ENCODE measurements at regions of chr10 and their contacts with region 1.

Region 1: DNA sequence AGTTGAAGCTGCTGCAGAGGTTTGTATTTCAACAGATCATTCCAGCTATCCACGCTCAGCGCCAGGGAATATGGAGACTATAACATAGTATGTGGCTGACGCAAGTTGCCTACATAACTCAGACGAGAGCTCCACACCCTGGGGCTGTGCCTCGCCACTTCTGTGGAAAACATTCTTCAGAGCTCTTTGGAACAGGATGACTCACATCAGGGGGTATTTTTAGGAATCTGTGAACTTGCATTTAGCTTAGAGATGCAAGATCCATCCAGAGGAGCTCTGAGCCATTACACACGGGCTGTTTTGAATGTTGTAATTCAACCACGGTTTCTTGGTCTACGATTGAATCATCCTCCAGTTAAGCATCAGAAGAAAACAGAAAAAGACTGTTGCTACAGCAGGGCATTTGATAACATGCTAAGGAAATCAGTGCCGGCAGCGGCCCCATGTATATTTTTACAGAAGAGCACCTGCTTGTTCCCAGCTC is 481.5 kb upstream of the AKR1E2 start:
- DNase-seq: peak; percentile 99
- H3K4me3 Mint-ChIP-seq: peak overlapping the region; percentile 48
- H3K27ac Mint-ChIP-seq: peak overlapping the region; percentile 99
- H3K4me1 Mint-ChIP-seq: peaks cover 26% of the 10 kb centered on the region
- H3K27me3 Mint-ChIP-seq: no peaks in the 10 kb centered on the region
- CTCF ChIP-seq: no peak

Region 2: DNA sequence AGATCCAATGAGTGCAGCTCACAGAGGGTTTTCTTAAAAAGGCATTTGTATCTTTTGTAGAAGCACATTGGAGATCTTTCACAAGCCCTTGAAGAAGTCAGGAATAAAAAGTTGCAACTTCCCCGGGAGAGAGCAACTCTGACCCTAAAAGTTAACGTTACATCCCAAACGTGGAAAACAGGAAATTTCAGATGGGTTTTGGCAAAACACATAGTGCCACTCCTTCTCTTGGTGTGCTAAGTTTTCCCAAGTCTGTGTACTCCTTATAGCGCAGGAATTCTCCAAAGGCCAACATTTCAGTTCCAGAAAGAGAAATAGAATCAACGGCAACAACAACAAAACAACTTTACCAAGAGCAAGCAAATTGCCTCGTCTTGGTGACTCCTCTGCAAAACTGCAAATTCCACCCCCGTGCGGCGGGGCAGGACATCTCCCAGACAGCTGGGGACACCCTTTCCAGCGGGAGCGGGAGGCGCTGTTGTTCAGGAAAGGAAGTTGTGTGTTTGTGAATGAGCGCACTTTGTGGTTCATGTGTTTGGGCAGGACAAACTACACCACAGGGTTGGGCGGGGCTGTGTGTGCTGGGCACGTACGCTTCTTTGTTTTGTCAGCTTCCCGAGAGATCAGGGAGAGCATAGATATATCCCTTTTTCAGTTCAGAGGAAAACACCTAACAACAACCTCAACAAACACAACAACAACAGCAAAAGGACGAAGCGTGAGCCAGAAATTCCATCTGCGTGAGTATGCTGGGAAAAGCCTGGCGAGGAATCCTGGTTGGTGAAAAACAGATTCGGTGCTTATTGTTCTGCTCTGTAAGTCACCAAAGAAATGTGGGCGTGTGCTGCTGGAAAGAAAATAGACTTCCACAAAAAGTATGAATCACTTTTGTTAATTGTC is 877.3 kb before region 1 on chr10:
- CTCF ChIA-PET with region 1: interaction called, 4 read pairs
- POLR2A ChIA-PET with region 1: interaction called, 10 read pairs
- intact Hi-C with region 1: loop called (anchors 5 kb)
- DNase-seq: peak; percentile 97
- H3K4me3 Mint-ChIP-seq: peak overlapping the region; percentile 79
- H3K27ac Mint-ChIP-seq: peak overlapping the region; percentile 100
- H3K4me1 Mint-ChIP-seq: peaks cover 46% of the 10 kb centered on the region
- H3K27me3 Mint-ChIP-seq: no peaks in the 10 kb centered on the region
- CTCF ChIP-seq: peak; percentile 55

Region 3: DNA sequence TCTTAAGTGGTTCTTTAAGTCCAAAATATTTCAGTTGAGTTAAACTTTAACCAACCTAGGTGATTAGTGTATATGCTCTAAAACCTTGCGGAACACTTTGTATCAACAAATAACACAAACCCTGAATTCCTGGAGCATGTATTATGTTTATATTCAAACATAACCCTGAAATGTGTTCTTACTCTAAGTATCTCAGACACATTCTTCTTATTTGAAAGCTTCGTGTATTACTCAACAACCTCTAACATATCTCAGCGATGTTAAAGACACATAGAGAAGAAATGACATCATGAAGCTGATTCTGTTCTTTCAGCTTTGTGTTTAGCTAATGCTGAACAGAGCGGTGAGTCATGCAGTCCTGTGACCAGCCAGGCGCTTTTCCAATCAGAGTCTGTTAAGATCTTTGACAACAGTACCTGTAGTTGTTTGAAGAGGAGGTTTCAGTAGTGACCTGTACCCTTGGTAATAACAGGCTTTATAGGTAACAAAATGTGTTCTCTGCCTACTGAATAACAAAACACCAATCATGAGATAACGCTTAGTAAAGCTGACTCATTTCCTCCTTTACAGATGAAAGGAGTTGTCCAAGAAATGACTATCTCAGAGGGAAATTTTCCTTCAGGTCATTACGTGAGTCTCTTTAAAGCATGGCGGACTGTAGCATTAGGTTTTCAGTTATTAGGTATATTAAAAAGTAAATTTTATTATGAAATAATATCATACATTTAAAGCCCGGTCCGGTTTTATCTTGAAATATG is 492.2 kb before region 1 on chr10:
- CTCF ChIA-PET with region 1: interaction called, 4 read pairs
- POLR2A ChIA-PET with region 1: interaction called, 45 read pairs
- intact Hi-C with region 1: loop called (anchors 1 kb)
- DNase-seq: peak; percentile 94
- H3K4me3 Mint-ChIP-seq: peak overlapping the region; percentile 54
- H3K27ac Mint-ChIP-seq: peak overlapping the region; percentile 98
- H3K4me1 Mint-ChIP-seq: peaks cover 33% of the 10 kb centered on the region
- H3K27me3 Mint-ChIP-seq: no peaks in the 10 kb centered on the region
- CTCF ChIP-seq: no peak

Region 4: DNA sequence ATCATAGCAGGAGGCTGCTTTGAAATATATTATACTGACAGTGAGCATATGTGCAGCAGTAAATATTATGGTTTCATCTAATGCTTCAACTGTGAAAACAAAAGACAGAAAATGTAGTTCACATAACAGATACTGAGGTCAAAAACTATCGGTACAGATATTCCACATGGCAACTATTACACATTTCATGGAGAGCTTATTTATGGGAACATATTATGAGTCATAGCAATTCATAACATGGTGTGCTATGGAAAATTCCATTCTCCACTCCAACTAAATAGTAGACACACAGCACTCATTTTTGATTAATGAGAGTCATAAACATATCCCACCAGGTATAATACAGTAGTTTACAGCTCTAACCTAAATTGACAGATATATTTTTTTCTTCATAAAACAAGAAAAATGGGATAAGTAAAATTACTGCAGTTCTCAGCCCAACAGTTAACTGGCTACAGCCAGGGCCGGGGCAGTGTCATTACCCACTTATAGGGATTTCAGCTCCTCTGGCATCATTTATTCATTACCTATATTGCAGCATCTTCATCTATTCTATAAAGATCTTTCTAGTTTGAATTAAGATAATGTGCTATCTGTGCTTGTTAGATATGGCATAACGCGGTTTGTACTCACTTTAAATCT is 83.9 kb before region 1 on chr10:
- CTCF ChIA-PET with region 1: no interaction called
- POLR2A ChIA-PET with region 1: interaction called, 11 read pairs
- intact Hi-C with region 1: no loop called
- DNase-seq: peak; percentile 60
- H3K4me3 Mint-ChIP-seq: peak overlapping the region; percentile 40
- H3K27ac Mint-ChIP-seq: peak overlapping the region; percentile 98
- H3K4me1 Mint-ChIP-seq: peaks cover 16% of the 10 kb centered on the region
- H3K27me3 Mint-ChIP-seq: no peaks in the 10 kb centered on the region
- CTCF ChIP-seq: no peak

Region 5: DNA sequence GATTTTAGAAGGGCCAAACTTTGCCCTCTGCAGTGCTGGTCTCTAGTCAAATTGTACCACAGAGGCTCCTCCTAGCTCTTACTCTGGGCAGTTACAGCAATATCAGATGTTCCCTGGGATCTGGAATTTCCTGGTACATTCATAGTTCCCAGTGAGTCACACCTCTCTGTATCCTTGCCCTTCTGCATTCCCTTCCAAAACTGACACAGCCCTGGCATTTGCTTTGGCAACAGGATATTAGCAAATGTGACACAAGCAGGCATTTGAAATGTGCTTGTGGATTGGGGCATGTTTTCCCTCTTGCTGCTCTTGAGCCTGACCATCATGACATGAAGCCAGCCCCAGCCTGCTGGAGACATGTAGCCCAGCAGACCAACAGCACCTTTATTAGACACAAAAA is 196.7 kb after region 1 on chr10:
- CTCF ChIA-PET with region 1: no interaction called
- POLR2A ChIA-PET with region 1: interaction called, 13 read pairs
- intact Hi-C with region 1: loop called (anchors 1 kb)
- DNase-seq: peak; percentile 96
- H3K4me3 Mint-ChIP-seq: no peak overlapping the region
- H3K27ac Mint-ChIP-seq: peak overlapping the region; percentile 89
- H3K4me1 Mint-ChIP-seq: peaks cover 14% of the 10 kb centered on the region
- H3K27me3 Mint-ChIP-seq: no peaks in the 10 kb centered on the region
- CTCF ChIP-seq: no peak

Region 6: GRCh38 chr10:4767033-4767814 is 422.7 kb after region 1 on chr10:
- CTCF ChIA-PET with region 1: interaction called, 3 read pairs
- POLR2A ChIA-PET with region 1: interaction called, 6 read pairs
- intact Hi-C with region 1: loop called (anchors 2 kb)
- DNase-seq: peak; percentile 57
- H3K4me3 Mint-ChIP-seq: no peak overlapping the region
- H3K27ac Mint-ChIP-seq: peak overlapping the region; percentile 76
- H3K4me1 Mint-ChIP-seq: peaks cover 31% of the 10 kb centered on the region
- H3K27me3 Mint-ChIP-seq: no peaks in the 10 kb centered on the region
- CTCF ChIP-seq: peak; percentile 78